Natural killer cell (primary cell): ENCODE measurements at regions of chr22 and their contacts with region 1.

Region 1: DNA sequence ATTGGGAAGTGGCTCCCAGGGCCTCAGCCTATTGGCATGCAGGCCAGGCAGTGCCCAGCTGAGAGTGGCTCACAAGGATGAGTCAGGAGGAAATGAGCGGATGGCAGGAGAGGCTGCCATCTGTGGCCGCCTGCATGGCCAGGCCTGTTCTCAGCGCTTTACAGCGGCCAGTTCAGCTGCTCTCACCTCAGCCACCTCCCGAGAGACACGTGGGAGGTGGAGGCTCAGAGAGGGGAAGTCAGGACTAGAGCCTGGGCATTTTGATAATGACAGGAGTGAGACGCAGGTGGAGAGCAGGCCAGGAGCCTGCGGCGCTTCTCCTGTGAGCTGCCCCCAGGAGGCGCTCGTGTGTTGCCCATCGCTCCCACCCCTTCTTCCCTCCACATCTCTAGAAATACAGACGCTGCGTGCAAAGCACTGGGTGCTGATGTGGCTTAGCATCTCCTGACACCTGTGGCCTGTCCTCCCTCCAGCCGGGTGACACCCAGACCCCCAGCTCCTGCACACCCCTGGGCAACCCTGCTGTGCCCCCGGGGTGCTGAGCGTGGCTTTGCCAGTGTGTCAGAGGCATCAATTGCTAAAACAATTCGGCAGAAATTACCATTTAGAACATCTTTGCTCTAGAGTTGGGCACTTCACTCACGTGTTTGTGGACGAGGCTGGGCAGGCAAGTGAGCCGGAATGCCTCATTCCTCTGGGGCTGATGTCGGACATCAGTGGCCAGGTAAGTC is 21.4 kb upstream of the PANX2 start:
- DNase-seq: peak; percentile 71 to 91
- ATAC-seq: peak; percentile 91 to 99 (median 96)
- H3K4me3 ChIP-seq: no peak overlapping the region
- H3K4me3 Mint-ChIP-seq: no peak overlapping the region
- H3K27ac ChIP-seq: no peak overlapping the region
- H3K27ac Mint-ChIP-seq: no peak overlapping the region
- H3K4me1 ChIP-seq: peaks cover 11% of the 10 kb centered on the region
- H3K4me1 Mint-ChIP-seq: peaks cover 0 to 10% of the 10 kb centered on the region in 2 donors
- H3K27me3 ChIP-seq: no peaks in the 10 kb centered on the region
- H3K27me3 Mint-ChIP-seq: no peaks in the 10 kb centered on the region
- CTCF ChIP-seq: peak; percentile 90

Region 2: DNA sequence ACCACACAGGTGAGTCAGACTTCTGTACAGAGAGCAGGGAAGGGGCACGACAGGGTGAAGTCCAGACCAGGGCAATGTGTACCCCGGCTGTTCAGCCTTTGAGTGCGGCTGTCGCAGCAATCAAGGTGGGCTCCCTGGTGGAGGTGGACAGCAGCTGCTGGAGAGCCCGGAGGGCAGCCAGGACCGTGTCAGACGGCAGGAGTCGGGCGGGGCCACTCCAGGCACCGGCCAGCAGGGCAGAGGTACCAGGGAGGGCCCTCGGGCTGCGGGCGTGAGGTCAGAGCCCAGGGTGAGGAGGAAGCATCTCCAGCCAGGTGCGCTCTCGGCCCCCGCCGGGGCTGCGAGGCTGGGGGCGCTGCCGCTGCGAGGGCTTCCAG is 189.4 kb before region 1 on chr22:
- intact Hi-C with region 1: no loop called
- DNase-seq: peak in 1 of 2 donors; percentile 58
- ATAC-seq: no peak
- H3K4me3 ChIP-seq: peak overlapping the region; percentile 44
- H3K4me3 Mint-ChIP-seq: peak overlapping the region; percentile 75
- H3K27ac ChIP-seq: peak overlapping the region; percentile 67
- H3K27ac Mint-ChIP-seq: peak overlapping the region; percentile 75 to 83
- H3K4me1 ChIP-seq: peaks cover 35% of the 10 kb centered on the region
- H3K4me1 Mint-ChIP-seq: peaks cover 5 to 26% of the 10 kb centered on the region in 2 donors
- H3K27me3 ChIP-seq: no peaks in the 10 kb centered on the region
- H3K27me3 Mint-ChIP-seq: no peaks in the 10 kb centered on the region
- CTCF ChIP-seq: no peak

Region 3: GRCh38 chr22:50209893-50210292 is 60.7 kb after region 1 on chr22:
- intact Hi-C with region 1: loop called (anchors 1 kb)
- DNase-seq: peak; percentile 72 to 90
- ATAC-seq: peak; percentile 80 to 94 (median 83)
- H3K4me3 ChIP-seq: no peak overlapping the region
- H3K4me3 Mint-ChIP-seq: no peak overlapping the region
- H3K27ac ChIP-seq: no peak overlapping the region
- H3K27ac Mint-ChIP-seq: peak overlapping the region; percentile 38 to 70
- H3K4me1 ChIP-seq: peaks cover 16% of the 10 kb centered on the region
- H3K4me1 Mint-ChIP-seq: peaks cover 14% of the 10 kb centered on the region in 2 donors
- H3K27me3 ChIP-seq: no peaks in the 10 kb centered on the region
- H3K27me3 Mint-ChIP-seq: no peaks in the 10 kb centered on the region
- CTCF ChIP-seq: peak; percentile 73

Region 4: DNA sequence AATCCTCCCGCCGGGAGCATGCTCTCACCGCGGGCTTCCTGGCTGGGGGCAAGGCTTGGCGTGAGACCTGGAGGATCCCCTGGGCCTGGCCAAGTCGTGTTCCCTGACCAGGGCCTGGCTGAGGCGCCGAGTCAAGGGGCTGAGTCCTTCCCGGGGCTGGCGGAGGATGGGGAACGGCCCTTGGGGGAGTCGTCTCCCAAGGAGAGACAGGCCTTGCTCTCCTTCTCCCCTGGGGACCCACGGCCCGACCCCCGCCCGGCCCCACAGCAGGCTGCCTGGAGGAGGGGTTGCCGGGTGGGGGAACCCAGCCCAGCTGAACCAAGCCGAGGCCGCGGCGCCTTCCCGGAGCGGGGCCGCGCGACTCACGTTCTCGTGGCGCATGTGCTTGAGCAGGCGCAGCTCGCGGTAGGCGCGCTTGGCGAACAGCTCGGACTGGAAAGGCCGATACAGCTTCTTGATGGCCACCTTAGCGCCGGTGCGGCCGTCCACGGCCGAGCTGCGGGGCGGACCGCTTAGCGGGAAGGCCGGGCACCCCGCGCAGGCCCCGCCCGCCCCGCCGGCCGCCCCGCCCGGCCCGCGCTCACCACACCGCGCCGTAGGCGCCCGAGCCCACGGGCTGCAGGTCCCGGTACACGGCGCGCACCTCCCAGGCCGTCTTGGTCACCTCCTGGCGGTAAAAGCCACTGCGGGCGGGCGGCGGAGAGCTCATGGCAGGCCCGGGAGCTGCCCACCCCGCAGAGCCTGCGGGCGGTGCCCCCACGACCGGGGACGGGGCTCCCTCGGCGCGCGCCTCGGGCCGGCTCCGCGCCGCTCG is 111.9 kb after region 1 on chr22:
- intact Hi-C with region 1: no loop called
- DNase-seq: no peak
- ATAC-seq: peak in 2 of 3 donors; percentile 42 to 55
- H3K4me3 ChIP-seq: no peak overlapping the region
- H3K4me3 Mint-ChIP-seq: no peak overlapping the region
- H3K27ac ChIP-seq: no peak overlapping the region
- H3K27ac Mint-ChIP-seq: no peak overlapping the region
- H3K4me1 ChIP-seq: peaks cover 13% of the 10 kb centered on the region
- H3K4me1 Mint-ChIP-seq: peaks cover 0 to 7% of the 10 kb centered on the region in 2 donors
- H3K27me3 ChIP-seq: peaks cover 13% of the 10 kb centered on the region
- H3K27me3 Mint-ChIP-seq: peaks cover 0 to 14% of the 10 kb centered on the region in 2 donors
- CTCF ChIP-seq: no peak